Mammary epithelial cell (primary cell): ENCODE measurements at regions of chrX and their contacts with region 1.

Region 1: GRCh38 chrX:104270920-104271512 is 16.3 kb upstream of the ESX1 start:
- DNase-seq: peak; percentile 53
- H3K4me3 ChIP-seq: peak overlapping the region in 1 of 3 experiments; percentile 18
- H3K27ac ChIP-seq: no peak overlapping the region
- H3K4me1 ChIP-seq: no peaks in the 10 kb centered on the region
- H3K27me3 ChIP-seq: peaks cover 9% of the 10 kb centered on the region
- CTCF ChIP-seq: peak; percentile 77 to 87

Region 2: DNA sequence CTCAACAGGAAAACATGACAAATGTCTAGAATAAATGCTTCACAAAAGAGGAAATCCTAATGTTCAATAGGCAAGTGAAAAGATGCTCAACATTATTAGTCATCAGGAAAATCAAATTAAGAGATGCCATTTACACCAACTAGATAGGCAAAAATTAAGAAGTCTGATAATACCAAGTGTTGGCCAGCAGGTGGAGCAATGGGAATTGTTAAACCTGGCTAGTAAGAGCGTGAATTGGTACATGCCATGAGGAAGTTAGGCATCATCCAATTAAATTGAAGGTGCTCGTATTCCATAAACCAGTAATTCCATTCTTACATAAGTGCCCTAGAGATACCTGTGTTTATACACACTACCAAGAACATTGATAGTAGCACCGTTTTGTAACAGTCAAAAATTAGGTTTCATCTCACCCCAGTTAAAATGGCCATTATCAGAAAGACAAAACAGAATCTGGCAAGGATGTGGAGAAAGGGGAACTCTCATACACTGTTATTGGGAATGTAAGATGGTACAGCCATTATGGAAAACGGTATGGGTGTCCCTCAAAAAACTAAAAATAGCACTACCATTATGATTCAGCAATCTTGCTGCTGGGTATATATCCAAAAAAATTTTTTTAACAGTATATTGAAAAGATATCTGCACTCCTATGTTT is 172.7 kb before region 1 on chrX:
- CTCF ChIA-PET with region 1: no interaction called
- dilution Hi-C with region 1: no loop called
- in situ Hi-C with region 1: no loop called
- intact Hi-C with region 1: loop called (anchors 1 kb)
- DNase-seq: peak; percentile 73
- H3K4me3 ChIP-seq: no peak overlapping the region
- H3K27ac ChIP-seq: no peak overlapping the region
- H3K4me1 ChIP-seq: no peaks in the 10 kb centered on the region
- H3K27me3 ChIP-seq: peaks cover 7% of the 10 kb centered on the region
- CTCF ChIP-seq: peak; percentile 62 to 71

Region 3: DNA sequence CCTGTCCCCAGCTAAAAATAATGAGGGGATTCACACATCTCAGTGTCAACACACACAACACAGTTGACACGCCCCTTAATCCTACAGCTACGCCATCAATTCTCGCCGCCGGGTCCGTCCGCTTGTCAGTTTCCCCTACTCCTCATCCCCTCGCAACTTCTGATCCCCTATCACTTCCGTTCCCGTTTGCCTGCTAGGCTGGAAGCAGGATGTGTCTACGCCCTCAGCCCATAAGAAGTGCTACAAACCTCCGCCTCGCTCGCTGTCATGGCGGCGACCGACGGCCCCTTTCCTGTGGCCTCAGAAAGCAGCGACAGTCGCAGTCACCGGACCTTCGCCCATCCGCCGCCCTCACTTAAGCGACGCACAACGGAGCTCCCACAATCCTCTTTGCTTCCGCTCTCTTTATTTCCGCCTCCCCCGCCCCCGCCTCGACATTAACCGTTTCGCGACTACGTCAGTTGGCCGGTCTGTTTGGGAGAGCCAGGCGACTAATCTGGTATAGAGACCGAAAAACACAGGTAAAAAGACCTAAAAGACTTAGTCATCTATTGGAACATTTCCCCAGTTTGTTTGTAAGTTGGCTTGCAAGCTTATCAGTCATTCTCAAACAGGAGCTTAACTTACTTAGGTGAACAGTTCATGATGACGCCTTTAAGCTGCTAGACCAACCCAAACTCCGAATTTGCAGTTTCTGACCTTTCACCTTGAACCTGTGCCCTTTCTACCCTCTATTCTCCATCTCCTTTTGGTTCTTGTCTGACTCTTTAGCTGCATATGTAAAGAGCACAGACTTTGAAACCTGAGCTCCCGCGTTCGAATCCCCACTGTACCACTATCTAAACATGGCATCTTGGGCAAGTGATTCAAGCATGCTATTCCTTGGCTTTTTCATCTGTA is 114.1 kb before region 1 on chrX and contains the start of gene SLC25A53:
- CTCF ChIA-PET with region 1: no interaction called
- dilution Hi-C with region 1: no loop called
- in situ Hi-C with region 1: no loop called
- intact Hi-C with region 1: no loop called
- DNase-seq: peak; percentile 79
- H3K4me3 ChIP-seq: peak within 1 kb of the TSS; percentile 60 to 72 (median 71)
- H3K27ac ChIP-seq: peak within 1 kb of the TSS; percentile 77
- H3K4me1 ChIP-seq: peaks cover 3% of the 10 kb centered on the region
- H3K27me3 ChIP-seq: peaks cover 2% of the 10 kb centered on the region
- CTCF ChIP-seq: no peak
- total RNA-seq, gene SLC25A53: 4.0 to 4.8 TPM

Region 4: DNA sequence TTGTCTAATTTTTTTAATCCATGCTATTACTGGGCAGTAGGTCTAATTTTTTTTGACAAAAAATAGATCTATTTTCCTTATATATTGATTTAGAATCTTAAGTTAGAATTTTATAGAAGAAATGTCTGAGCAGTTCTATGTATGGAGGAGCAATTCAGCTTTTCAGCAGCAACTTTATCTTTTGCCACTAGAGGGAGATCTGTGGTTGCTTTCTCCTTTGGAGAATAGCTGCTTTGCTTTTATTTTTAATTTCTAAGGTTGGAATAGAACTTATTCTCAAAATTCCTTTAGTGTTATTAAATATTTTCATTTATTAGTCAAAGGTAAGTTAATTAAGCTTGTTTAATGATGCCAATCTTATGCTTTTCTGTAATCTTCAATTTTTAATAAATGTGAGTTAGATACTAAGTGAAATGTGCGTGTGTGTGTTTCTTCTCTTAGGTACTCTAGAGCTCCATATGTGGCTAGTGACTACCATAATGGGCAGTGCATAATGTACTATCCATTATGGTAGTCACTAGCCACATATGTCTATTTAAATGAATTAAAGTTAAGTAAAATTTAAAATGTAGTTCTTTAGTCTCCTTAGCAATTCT is 75.4 kb before region 1 on chrX:
- CTCF ChIA-PET with region 1: no interaction called
- dilution Hi-C with region 1: no loop called
- in situ Hi-C with region 1: no loop called
- intact Hi-C with region 1: loop called (anchors 1 kb)
- DNase-seq: peak; percentile 22
- H3K4me3 ChIP-seq: no peak overlapping the region
- H3K27ac ChIP-seq: no peak overlapping the region
- H3K4me1 ChIP-seq: peaks cover 7% of the 10 kb centered on the region
- H3K27me3 ChIP-seq: no peaks in the 10 kb centered on the region
- CTCF ChIP-seq: peak; percentile 79 to 93

Region 5: GRCh38 chrX:104343428-104344129 is 72.6 kb after region 1 on chrX:
- CTCF ChIA-PET with region 1: no interaction called
- dilution Hi-C with region 1: no loop called
- in situ Hi-C with region 1: no loop called
- intact Hi-C with region 1: loop called (anchors 1 kb)
- DNase-seq: peak; percentile 58
- H3K4me3 ChIP-seq: no peak overlapping the region
- H3K27ac ChIP-seq: peak overlapping the region; percentile 23
- H3K4me1 ChIP-seq: peaks cover 2% of the 10 kb centered on the region
- H3K27me3 ChIP-seq: no peaks in the 10 kb centered on the region
- CTCF ChIP-seq: peak; percentile 63 to 72